CD4-positive, alpha-beta T cell (primary cell): ENCODE measurements at regions of chr6 and their contacts with region 1.

Region 1: DNA sequence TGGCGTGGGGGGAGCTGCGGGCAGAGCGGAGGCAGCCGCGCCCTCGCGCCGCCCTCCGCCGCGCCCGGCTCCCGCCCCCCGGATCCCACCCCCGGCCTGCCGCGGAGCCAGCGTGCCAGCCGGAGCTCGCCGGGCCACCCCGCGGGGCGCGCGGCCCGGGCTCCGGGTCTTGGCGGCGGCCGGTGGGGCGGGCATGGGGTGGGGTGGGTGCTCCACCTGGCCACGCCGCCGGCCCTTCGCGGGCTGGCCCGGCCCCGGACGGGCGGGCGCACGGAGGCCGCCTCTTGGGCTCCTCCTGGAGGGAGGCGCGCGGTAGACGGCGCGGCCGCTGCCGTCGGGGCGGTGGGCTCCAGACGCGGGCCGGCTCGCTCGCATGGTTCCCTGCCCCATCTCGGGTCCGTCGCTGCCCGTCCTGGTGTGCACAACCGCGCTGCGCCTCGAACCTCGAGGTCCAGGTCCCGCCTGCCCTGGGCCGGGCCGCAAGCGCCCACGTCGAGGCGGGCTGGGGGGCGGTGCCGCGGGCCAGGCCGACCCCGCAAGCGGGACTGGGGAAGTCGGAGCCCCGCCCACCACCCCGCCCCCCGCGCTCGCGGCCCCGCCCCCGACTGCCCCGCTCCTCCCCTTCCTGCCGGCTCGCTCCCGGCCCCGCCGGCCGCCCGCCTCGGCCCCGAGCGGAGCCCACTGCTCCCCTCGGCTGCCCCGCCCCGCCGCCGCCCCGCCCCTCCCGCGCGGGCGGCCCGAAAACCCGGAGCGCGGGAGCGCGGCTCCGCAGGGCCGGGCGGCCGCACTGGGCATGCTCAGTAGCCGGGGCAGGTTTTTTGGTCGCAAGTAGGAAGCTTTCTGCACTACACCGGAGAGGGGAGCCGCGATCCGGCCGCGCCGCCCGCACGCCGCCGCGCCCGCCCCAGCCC is at the start of gene CDYL:
- DNase-seq: peak; percentile 73 to 95 (median 88)
- ATAC-seq: peak; percentile 73
- H3K4me3 ChIP-seq: peak within 1 kb of the TSS; percentile 81
- H3K4me3 Mint-ChIP-seq: peak within 1 kb of the TSS; percentile 98
- H3K27ac ChIP-seq: no peak within 1 kb of the TSS
- H3K27ac Mint-ChIP-seq: peak within 1 kb of the TSS; percentile 87
- H3K4me1 ChIP-seq: peaks cover 18% of the 10 kb centered on the region
- H3K4me1 Mint-ChIP-seq: peaks cover 46% of the 10 kb centered on the region
- H3K27me3 ChIP-seq: no peaks in the 10 kb centered on the region
- H3K27me3 Mint-ChIP-seq: no peaks in the 10 kb centered on the region
- CTCF ChIP-seq: no peak
- total RNA-seq, gene CDYL: 23.8 to 23.9 TPM

Region 2: GRCh38 chr6:3466488-3467219 is 1309.2 kb before region 1 on chr6:
- CTCF ChIA-PET with region 1: no interaction called
- POLR2A ChIA-PET with region 1: no interaction called
- intact Hi-C with region 1: loop called in 1 of 2 experiments (anchors 10 kb)
- DNase-seq: no peak
- ATAC-seq: no peak
- H3K4me3 ChIP-seq: no peak overlapping the region
- H3K4me3 Mint-ChIP-seq: no peak overlapping the region
- H3K27ac ChIP-seq: no peak overlapping the region
- H3K27ac Mint-ChIP-seq: no peak overlapping the region
- H3K4me1 ChIP-seq: no peaks in the 10 kb centered on the region
- H3K4me1 Mint-ChIP-seq: no peaks in the 10 kb centered on the region
- H3K27me3 ChIP-seq: peaks cover 0 to 2% of the 10 kb centered on the region in 2 experiments
- H3K27me3 Mint-ChIP-seq: peaks cover 7% of the 10 kb centered on the region
- CTCF ChIP-seq: no peak

Region 3: GRCh38 chr6:4637691-4638433 is 138.0 kb before region 1 on chr6:
- CTCF ChIA-PET with region 1: no interaction called
- POLR2A ChIA-PET with region 1: no interaction called
- intact Hi-C with region 1: no loop called
- DNase-seq: no peak
- ATAC-seq: no peak
- H3K4me3 ChIP-seq: no peak overlapping the region
- H3K4me3 Mint-ChIP-seq: no peak overlapping the region
- H3K27ac ChIP-seq: no peak overlapping the region
- H3K27ac Mint-ChIP-seq: no peak overlapping the region
- H3K4me1 ChIP-seq: no peaks in the 10 kb centered on the region
- H3K4me1 Mint-ChIP-seq: no peaks in the 10 kb centered on the region
- H3K27me3 ChIP-seq: peaks cover 0 to 2% of the 10 kb centered on the region in 2 experiments
- H3K27me3 Mint-ChIP-seq: peaks cover 37% of the 10 kb centered on the region
- CTCF ChIP-seq: no peak

Region 4: GRCh38 chr6:4756247-4756646 is 19.6 kb before region 1 on chr6:
- CTCF ChIA-PET with region 1: no interaction called
- POLR2A ChIA-PET with region 1: no interaction called
- intact Hi-C with region 1: no loop called
- DNase-seq: no peak
- ATAC-seq: no peak
- H3K4me3 ChIP-seq: no peak overlapping the region
- H3K4me3 Mint-ChIP-seq: no peak overlapping the region
- H3K27ac ChIP-seq: no peak overlapping the region
- H3K27ac Mint-ChIP-seq: no peak overlapping the region
- H3K4me1 ChIP-seq: no peaks in the 10 kb centered on the region
- H3K4me1 Mint-ChIP-seq: no peaks in the 10 kb centered on the region
- H3K27me3 ChIP-seq: peaks cover 4 to 9% of the 10 kb centered on the region in 2 experiments
- H3K27me3 Mint-ChIP-seq: peaks cover 28% of the 10 kb centered on the region
- CTCF ChIP-seq: no peak

Region 5: DNA sequence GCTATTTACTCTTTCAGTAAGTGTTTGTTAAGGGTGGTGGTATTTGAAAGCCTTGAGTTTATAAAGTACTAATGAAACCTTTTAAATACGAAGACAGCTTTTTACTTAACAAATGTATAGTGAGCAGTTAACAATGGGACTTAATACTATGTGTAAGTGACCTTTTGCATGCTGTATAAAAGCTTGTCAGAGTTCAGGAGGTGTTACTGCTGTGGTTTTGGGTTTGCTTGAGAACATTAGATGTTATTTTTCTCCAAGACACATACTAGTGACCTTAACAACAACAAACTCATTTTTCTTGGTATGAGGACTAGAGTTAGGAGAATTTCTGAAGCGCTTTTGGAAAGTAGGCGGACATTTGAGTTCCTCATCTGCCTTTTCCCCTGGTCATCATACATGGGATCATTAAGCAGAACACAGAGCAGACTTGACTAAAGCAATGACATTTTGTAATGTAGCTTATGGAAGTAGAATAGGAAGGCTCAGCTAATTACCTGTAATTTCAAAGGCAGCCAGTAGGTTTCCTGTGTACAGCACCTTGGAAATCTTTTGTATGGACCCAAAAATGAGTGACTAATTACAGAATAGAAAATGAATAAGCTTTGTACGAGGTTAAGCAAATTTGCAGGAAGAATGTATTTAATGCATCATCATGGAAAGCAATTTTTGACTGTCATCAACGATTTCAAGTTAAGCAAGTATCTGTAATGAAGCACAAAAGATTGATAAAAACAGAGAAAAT is 14.5 kb after region 1 on chr6:
- CTCF ChIA-PET with region 1: no interaction called
- POLR2A ChIA-PET with region 1: interaction called, 12 read pairs
- intact Hi-C with region 1: no loop called
- DNase-seq: no peak
- ATAC-seq: no peak
- H3K4me3 ChIP-seq: no peak overlapping the region
- H3K4me3 Mint-ChIP-seq: no peak overlapping the region
- H3K27ac ChIP-seq: no peak overlapping the region
- H3K27ac Mint-ChIP-seq: no peak overlapping the region
- H3K4me1 ChIP-seq: peaks cover 32% of the 10 kb centered on the region
- H3K4me1 Mint-ChIP-seq: peaks cover 60% of the 10 kb centered on the region
- H3K27me3 ChIP-seq: no peaks in the 10 kb centered on the region
- H3K27me3 Mint-ChIP-seq: no peaks in the 10 kb centered on the region
- CTCF ChIP-seq: no peak

Region 6: DNA sequence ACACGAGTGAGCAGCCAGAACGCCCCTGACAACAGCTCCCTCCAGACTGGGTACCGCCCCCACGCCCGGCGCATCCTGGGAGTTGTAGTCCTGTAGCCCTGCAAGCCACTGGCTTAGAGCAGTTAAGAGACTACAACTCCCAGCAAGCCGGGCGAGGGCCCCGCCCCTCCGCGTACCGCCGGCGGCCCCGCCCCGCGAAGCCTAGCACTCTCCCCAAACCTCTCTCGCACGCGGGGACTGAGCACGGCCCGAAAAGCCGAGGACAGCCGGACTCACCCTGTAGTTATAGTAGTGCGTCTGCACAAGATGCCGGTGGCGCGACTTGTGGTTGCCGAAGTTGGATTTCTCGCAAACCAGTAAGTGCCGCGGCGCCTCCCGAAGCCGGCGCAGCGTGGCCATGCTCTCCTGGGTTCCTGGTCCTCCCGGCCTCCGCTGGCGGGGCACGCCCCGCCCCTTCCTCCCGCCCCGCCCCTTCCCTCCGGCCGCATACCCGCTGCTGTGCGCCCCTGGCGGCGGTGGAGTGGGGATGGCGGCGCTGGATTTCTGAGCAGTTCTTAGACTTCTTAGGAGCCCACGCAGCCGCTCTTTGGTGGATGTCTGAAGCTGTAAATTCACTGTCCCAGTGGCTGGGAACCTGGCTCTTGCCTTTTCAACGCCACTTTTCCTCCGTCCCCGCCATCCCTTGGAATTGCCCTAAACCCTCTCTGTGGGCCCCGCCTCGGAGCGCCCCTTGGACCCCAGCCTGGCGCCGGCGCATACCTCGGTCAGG is 227.9 kb after region 1 on chr6 and contains the start of gene RPP40:
- CTCF ChIA-PET with region 1: no interaction called
- POLR2A ChIA-PET with region 1: interaction called, 4 read pairs
- intact Hi-C with region 1: loop called (anchors 2 to 10 kb)
- DNase-seq: peak; percentile 95 to 100 (median 98)
- ATAC-seq: peak; percentile 92
- H3K4me3 ChIP-seq: peak within 1 kb of the TSS; percentile 81
- H3K4me3 Mint-ChIP-seq: peak within 1 kb of the TSS; percentile 90
- H3K27ac ChIP-seq: peak within 1 kb of the TSS; percentile 83
- H3K27ac Mint-ChIP-seq: peak within 1 kb of the TSS; percentile 91
- H3K4me1 ChIP-seq: peaks cover 15% of the 10 kb centered on the region
- H3K4me1 Mint-ChIP-seq: peaks cover 17% of the 10 kb centered on the region
- H3K27me3 ChIP-seq: no peaks in the 10 kb centered on the region
- H3K27me3 Mint-ChIP-seq: no peaks in the 10 kb centered on the region
- CTCF ChIP-seq: peak; percentile 77
- total RNA-seq, gene RPP40: 0.36 to 0.69 TPM

Region 7: DNA sequence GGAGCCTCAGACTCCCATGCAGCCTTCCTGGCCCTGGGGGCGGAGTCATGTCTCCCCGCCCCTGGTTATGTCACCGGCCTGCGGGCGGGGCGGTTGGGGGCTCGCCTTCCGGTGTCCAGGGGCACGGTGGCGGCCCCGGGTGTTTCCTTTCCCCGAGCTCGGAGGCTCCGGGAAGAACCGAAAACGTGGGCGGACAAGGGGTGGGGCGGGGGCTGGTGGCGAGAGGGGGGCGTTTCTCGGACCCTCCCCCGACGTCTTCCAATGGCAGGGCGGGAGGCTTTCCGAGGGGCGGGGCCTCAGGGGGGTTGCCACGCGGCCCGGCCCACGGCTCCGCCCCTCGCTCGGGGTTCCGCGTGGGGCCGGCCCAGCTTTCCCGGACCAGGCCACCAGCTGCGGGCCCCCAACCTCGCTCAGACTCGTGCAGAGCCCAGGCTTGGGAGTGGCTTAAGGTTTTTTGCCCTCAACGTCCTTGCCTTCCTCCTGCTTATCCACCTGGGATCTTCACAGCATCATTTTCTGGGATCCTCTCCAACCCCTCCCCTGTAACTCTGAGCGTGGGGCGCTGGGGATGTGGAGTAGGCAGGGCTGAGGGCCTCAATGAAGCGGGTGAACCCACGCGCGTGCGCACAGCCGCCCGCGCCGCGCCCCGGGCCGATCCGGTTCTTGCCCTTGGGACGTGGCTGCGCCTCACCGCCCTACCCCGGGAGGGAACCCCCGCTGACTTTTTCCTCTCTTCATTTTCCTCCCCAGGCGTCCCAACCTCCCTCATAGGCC is 1233.0 kb after region 1 on chr6:
- CTCF ChIA-PET with region 1: no interaction called
- POLR2A ChIA-PET with region 1: no interaction called
- intact Hi-C with region 1: loop called in 1 of 2 experiments (anchors 10 kb)
- DNase-seq: peak in 5 of 14 experiments; percentile 32 to 63 (median 54)
- ATAC-seq: peak; percentile 54
- H3K4me3 ChIP-seq: peak overlapping the region; percentile 47
- H3K4me3 Mint-ChIP-seq: peak overlapping the region; percentile 69
- H3K27ac ChIP-seq: no peak overlapping the region
- H3K27ac Mint-ChIP-seq: no peak overlapping the region
- H3K4me1 ChIP-seq: peaks cover 47% of the 10 kb centered on the region
- H3K4me1 Mint-ChIP-seq: peaks cover 45% of the 10 kb centered on the region
- H3K27me3 ChIP-seq: peaks cover 54 to 71% of the 10 kb centered on the region in 2 experiments
- H3K27me3 Mint-ChIP-seq: peaks cover 80% of the 10 kb centered on the region
- CTCF ChIP-seq: no peak